A673 (cell line): ENCODE measurements at regions of chr4 and their contacts with region 1.

Region 1: DNA sequence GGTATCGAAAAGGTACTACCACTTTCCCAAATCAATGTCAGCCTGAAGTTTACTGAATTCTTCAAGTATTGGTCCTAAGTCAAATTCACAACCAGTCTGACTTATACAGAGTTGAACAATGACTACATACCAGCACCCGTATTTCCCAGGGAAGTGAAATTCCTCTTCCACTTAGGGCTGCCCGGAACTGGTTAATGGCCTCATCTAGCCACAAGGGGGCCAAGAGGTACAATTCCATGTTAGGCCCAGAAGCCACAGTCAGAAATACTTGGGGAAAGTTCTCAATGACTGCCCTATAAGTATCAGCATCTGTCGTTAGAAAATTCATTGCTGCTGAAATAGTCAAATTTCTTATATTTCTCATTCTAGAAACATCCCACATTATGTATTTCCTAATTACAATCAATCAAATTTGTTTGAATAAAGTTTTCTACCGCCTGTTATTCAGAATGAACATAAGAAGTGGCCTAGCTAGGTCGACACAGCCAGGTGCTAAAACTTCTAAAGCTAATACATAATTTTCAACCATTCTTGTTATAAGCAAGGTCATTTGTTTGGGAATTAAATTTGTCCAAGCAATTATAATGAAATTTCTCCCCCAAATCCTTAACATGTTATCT is 5.7 kb upstream of the PCDH7 start:
- DNase-seq: peak; percentile 89
- H3K4me3 ChIP-seq: no peak overlapping the region
- H3K27ac ChIP-seq: peak overlapping the region; percentile 85
- H3K4me1 ChIP-seq: peaks cover 25% of the 10 kb centered on the region
- H3K27me3 ChIP-seq: no peaks in the 10 kb centered on the region
- CTCF ChIP-seq: peak; percentile 86

Region 2: DNA sequence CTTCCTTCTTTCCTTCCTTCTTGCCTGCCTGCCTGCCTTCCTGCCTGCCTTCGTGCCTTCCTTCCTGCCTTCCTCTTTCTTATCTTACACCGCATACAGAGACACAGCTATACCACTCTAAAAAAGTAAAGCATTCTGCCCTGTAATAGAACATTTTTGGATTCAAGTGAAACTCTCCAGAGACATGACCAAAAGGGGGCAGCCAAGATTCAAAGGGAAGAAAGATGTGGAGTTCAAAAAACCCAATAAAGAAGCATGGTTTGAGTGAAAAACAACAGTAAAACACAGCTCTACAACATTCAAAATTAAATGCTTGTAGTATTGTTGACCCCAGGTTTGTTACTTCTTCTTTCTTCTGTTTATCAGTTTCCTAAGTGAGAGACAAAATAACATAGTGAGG is 909.3 kb before region 1 on chr4:
- CTCF ChIA-PET with region 1: no interaction called
- POLR2A ChIA-PET with region 1: no interaction called
- intact Hi-C with region 1: loop called (anchors 5 kb)
- DNase-seq: peak; percentile 87
- H3K4me3 ChIP-seq: no peak overlapping the region
- H3K27ac ChIP-seq: peak overlapping the region; percentile 77
- H3K4me1 ChIP-seq: peaks cover 19% of the 10 kb centered on the region
- H3K27me3 ChIP-seq: no peaks in the 10 kb centered on the region
- CTCF ChIP-seq: peak; percentile 69

Region 3: DNA sequence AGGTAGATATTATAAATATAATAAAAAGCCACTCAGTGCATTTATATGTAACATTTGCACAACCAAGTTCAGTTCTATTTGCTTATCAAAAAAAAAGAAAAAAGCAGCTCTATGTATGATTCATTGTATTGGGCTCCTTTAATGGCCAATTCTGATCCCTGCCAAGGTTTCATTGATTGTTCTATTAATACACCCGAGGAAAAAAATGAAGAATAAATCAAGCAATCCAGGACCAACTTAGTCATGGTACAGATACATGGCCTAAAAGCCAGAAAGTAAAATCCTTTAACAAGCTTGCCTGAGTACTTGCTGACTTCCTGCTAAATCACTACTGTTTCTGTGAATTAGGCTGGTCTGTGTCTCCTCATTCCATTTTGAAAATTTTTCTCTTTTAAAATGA is 72.0 kb before region 1 on chr4:
- CTCF ChIA-PET with region 1: no interaction called
- POLR2A ChIA-PET with region 1: no interaction called
- intact Hi-C with region 1: no loop called
- DNase-seq: no peak
- H3K4me3 ChIP-seq: no peak overlapping the region
- H3K27ac ChIP-seq: no peak overlapping the region
- H3K4me1 ChIP-seq: no peaks in the 10 kb centered on the region
- H3K27me3 ChIP-seq: no peaks in the 10 kb centered on the region
- CTCF ChIP-seq: no peak

Region 4: GRCh38 chr4:30957706-30958105 is 243.2 kb after region 1 on chr4:
- CTCF ChIA-PET with region 1: no interaction called
- POLR2A ChIA-PET with region 1: interaction called, 4 read pairs
- intact Hi-C with region 1: loop called (anchors 2 kb)
- DNase-seq: no peak
- H3K4me3 ChIP-seq: no peak overlapping the region
- H3K27ac ChIP-seq: peak overlapping the region; percentile 96
- H3K4me1 ChIP-seq: peaks cover 86% of the 10 kb centered on the region
- H3K27me3 ChIP-seq: no peaks in the 10 kb centered on the region
- CTCF ChIP-seq: no peak

Region 5: GRCh38 chr4:31089815-31090214 is 375.3 kb after region 1 on chr4:
- CTCF ChIA-PET with region 1: no interaction called
- POLR2A ChIA-PET with region 1: no interaction called
- intact Hi-C with region 1: loop called (anchors 10 kb)
- DNase-seq: peak; percentile 35
- H3K4me3 ChIP-seq: no peak overlapping the region
- H3K27ac ChIP-seq: no peak overlapping the region
- H3K4me1 ChIP-seq: peaks cover 56% of the 10 kb centered on the region
- H3K27me3 ChIP-seq: no peaks in the 10 kb centered on the region
- CTCF ChIP-seq: no peak

Region 6: DNA sequence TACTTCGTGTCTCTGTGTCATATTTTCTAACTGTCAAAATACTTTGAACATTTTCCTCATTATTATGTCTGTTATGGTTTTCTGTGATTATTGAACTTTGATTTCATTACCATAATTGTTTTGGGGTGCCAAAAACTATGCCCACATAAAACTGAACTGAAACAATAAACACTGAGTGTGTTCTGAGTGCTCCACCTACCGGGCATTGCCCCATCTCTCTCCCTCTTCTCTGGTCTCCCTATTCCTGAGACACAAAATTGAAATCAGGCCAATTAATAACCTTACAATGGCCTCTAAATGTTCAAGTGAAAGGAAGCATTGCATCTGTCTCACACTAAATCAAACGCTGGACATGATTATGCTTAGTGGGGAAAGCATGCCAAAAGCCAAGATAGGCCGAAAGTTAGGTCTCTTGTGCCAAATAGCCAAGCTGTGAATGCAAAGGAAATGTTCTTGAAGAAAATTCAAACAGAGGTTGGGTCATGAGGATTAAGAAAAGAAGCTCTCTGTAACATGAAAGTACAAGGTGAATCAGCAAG is 978.0 kb after region 1 on chr4:
- CTCF ChIA-PET with region 1: no interaction called
- POLR2A ChIA-PET with region 1: no interaction called
- intact Hi-C with region 1: loop called (anchors 10 kb)
- DNase-seq: peak; percentile 32
- H3K4me3 ChIP-seq: no peak overlapping the region
- H3K27ac ChIP-seq: no peak overlapping the region
- H3K4me1 ChIP-seq: no peaks in the 10 kb centered on the region
- H3K27me3 ChIP-seq: no peaks in the 10 kb centered on the region
- CTCF ChIP-seq: peak; percentile 59